Activated naive CD4-positive, alpha-beta T cell treated with anti-CD3 and anti-CD28 coated beads for 36 hours (primary cell): ENCODE measurements at regions of chr4 and their contacts with region 1.

Region 1: GRCh38 chr4:184417802-184418511 is 56.4 kb downstream of the IRF2 start:
- DNase-seq: peak; percentile 27
- H3K4me3 Mint-ChIP-seq: no peak overlapping the region
- H3K27ac Mint-ChIP-seq: peak overlapping the region; percentile 73
- H3K4me1 Mint-ChIP-seq: peaks cover 84% of the 10 kb centered on the region
- H3K27me3 Mint-ChIP-seq: no peaks in the 10 kb centered on the region

Region 2: GRCh38 chr4:184287697-184288255 is 130.2 kb before region 1 on chr4:
- CTCF ChIA-PET with region 1: interaction called, 4 read pairs
- intact Hi-C with region 1: loop called (anchors 1 kb)
- DNase-seq: no peak
- H3K4me3 Mint-ChIP-seq: no peak overlapping the region
- H3K27ac Mint-ChIP-seq: no peak overlapping the region
- H3K4me1 Mint-ChIP-seq: peaks cover 52% of the 10 kb centered on the region
- H3K27me3 Mint-ChIP-seq: peaks cover 4% of the 10 kb centered on the region

Region 3: DNA sequence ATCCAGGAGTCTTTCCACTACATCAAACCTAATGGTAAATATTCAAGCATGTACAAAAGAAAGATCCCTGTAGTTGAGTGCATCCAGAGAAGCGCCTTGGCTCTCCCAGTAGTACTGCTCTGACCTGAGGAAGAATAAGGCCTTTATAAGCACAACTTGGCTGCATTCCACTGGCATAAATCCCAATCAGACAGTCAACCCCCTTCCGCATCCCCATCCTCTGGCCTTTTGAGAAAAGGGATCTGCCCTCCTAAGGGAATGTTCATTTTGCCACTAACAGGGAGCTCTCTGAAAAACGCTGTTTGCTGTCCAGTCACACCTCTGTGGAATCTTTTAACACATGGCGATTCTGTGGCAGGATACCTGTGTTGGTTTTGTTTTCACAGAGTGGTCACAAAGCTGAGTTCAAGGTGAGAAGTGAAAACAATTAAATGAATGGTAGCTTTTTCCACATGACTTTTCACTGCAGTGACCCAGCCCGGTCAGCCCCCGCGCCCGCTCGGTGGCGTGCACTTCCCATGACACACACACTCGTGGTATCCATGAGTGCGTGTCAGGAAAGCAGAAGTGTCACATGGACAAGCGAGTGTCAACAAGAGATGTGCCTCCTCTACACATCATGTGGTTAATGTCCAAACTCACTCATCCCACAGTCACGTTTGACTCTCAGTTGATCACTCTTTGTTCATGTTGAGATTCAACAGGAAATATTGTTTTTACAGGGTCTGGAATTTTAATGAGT is 88.1 kb before region 1 on chr4:
- CTCF ChIA-PET with region 1: no interaction called
- intact Hi-C with region 1: loop called (anchors 1 kb)
- DNase-seq: no peak
- H3K4me3 Mint-ChIP-seq: no peak overlapping the region
- H3K27ac Mint-ChIP-seq: no peak overlapping the region
- H3K4me1 Mint-ChIP-seq: peaks cover 27% of the 10 kb centered on the region
- H3K27me3 Mint-ChIP-seq: no peaks in the 10 kb centered on the region

Region 4: DNA sequence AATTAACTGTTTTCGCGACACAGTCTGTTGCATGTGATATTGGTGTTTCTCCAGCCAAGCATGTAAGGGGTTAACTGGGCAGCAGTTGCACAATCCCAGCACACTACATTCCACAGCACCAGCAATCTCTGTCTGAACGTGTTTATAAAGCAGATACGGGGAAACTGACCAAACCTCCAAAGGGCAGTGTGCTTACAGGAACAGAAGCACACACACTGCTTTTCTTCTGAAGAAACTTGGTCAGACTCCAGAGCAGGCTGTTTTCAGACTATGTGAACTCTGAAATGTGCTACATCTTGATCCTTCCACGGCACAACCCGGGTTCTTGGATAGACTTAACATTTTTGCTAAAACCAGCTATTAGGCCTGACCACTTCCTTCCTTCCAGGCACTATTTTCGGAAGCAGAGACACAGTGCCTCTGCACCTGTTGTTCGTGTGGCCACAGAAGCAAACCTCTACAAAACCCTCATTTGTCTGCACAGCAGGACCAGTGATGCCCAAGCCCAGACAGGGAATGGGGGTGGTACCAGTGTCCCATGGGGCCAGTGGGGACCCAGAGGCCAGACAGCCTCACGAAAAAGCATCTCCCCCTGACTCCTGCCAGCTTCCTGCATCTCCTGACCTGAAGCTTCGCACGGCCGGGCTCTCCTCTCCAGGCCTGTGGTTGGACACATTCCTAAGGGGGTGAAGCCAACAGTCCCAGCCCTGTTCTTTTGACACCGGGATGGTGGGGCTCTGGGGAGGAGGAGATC is 33.7 kb before region 1 on chr4:
- CTCF ChIA-PET with region 1: interaction called, 3 read pairs
- intact Hi-C with region 1: loop called (anchors 2 kb)
- DNase-seq: peak; percentile 38
- H3K4me3 Mint-ChIP-seq: no peak overlapping the region
- H3K27ac Mint-ChIP-seq: no peak overlapping the region
- H3K4me1 Mint-ChIP-seq: peaks cover 61% of the 10 kb centered on the region
- H3K27me3 Mint-ChIP-seq: no peaks in the 10 kb centered on the region

Region 5: DNA sequence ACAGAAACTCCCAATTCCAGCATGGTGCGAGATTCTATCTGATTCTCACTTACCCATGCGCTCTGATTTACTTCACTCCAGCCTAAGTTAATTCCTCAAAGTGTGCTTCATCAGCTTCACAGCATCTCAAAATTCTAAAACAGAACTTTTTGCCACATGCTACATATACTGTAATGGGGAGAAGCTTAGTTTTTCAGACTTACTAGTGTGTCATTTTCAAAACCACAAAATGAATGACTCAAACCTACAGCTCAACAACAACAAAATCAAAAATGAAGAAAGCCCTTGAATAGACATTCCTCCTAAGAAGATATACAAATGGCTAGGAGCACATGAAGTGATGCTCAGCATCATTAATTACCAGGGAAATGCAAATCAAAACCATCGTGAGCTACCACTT is 41.5 kb after region 1 on chr4:
- CTCF ChIA-PET with region 1: interaction called, 4 read pairs
- intact Hi-C with region 1: loop called (anchors 1 kb)
- DNase-seq: no peak
- H3K4me3 Mint-ChIP-seq: no peak overlapping the region
- H3K27ac Mint-ChIP-seq: peak overlapping the region; percentile 14
- H3K4me1 Mint-ChIP-seq: peaks cover 72% of the 10 kb centered on the region
- H3K27me3 Mint-ChIP-seq: no peaks in the 10 kb centered on the region